Dendritic cell treated with granulocyte-macrophage colony-stimulating factor and Interleukin-4, amounts not matched to agents 40 ng/mL and 50 ng/mL, for 4 days (primary cell): ENCODE measurements at regions of chr15 and their contacts with region 1.

Region 1: DNA sequence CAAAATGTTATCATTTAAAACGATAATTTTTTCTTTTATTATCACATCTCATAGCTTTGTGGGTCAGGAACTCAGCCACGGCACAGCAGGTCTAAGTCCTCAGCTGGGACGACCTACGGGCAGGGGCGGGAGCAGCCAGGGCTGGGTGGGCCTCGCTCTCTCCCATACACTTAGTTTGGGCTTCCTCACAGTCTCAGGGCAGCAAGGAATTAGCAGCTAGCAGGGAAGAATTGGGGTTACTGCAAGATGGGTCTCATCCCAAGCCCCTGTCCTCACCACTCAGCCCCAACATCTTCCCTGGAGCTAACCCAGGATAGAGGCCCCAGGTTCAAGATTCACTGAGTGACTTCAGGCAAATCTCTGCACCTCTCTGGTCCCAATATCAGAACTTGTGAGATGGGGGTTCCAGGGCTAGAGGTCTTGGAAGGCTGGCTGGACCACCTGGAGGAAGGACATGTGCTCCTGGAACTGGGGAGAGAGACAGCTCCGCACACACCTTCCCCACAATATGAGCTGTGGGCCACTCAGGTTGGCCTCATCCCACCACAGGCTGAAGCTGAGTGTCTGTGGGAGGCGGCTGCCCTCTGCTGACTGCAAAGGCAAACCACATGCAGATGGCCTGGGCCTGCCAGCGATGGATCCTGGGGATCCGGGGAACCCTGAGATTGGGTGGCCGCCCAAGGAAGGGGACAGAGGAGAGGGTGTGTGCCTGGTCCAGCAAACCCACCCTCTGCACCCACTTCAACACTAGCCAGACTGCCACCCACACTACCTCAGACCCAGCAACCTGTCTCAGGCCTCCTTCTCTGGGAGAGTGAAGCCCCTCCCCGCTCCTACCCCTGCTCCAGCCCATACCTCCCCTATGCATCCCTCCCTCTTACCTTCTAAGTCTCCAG is 45.0 kb downstream of the CYP11A1 start:
- H3K4me3 Mint-ChIP-seq: no peak overlapping the region
- H3K27ac Mint-ChIP-seq: no peak overlapping the region
- H3K4me1 Mint-ChIP-seq: peaks cover 25% of the 10 kb centered on the region
- H3K27me3 Mint-ChIP-seq: peaks cover 9% of the 10 kb centered on the region

Region 2: GRCh38 chr15:73972984-73973682 is 349.3 kb before region 1 on chr15:
- intact Hi-C with region 1: loop called (anchors 1 kb)
- H3K4me3 Mint-ChIP-seq: peak overlapping the region; percentile 52
- H3K27ac Mint-ChIP-seq: no peak overlapping the region
- H3K4me1 Mint-ChIP-seq: peaks cover 23% of the 10 kb centered on the region
- H3K27me3 Mint-ChIP-seq: peaks cover 17% of the 10 kb centered on the region

Region 3: DNA sequence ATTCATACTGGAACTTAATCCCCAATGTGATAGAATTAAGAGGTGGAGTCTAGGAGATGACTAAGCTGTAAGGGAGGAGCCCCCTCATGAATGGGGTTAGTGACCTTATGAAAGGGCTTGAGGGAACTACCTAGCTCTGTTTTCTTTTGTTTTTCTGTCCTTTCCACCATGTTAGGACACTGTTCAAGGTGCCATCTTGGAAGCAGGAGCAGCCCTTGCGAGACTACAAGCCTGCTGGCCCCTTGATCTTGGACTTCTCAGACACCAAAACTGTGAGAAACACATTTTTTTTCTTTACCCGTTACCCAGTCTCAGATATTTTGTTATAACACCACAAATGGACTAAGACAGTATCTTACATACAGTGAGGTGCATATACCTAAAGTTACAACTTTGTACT is 266.6 kb before region 1 on chr15:
- intact Hi-C with region 1: loop called (anchors 5 kb)
- H3K4me3 Mint-ChIP-seq: no peak overlapping the region
- H3K27ac Mint-ChIP-seq: no peak overlapping the region
- H3K4me1 Mint-ChIP-seq: peaks cover 20% of the 10 kb centered on the region
- H3K27me3 Mint-ChIP-seq: peaks cover 6% of the 10 kb centered on the region

Region 4: GRCh38 chr15:74127260-74127953 is 195.0 kb before region 1 on chr15:
- intact Hi-C with region 1: loop called (anchors 2 kb)
- H3K4me3 Mint-ChIP-seq: no peak overlapping the region
- H3K27ac Mint-ChIP-seq: no peak overlapping the region
- H3K4me1 Mint-ChIP-seq: peaks cover 18% of the 10 kb centered on the region
- H3K27me3 Mint-ChIP-seq: peaks cover 87% of the 10 kb centered on the region